GM18951 (cell line): ENCODE measurements at regions of chr17 and their contacts with region 1.

Region 1: GRCh38 chr17:62703775-62704378 is 76.4 kb downstream of the MRC2 start:
- POLR2A ChIP-seq: no peak

Region 2: GRCh38 chr17:62968445-62968923 is 264.6 kb after region 1 on chr17:
- in situ Hi-C with region 1: loop called (anchors 10 kb)
- POLR2A ChIP-seq: no peak